GM13977 (cell line): ENCODE measurements at regions of chr17 and their contacts with region 1.

Region 1: GRCh38 chr17:73429440-73430164 is 117.8 kb upstream of the CDC42EP4 start:
- DNase-seq: peak; percentile 89
- CTCF ChIP-seq: peak; percentile 98

Region 2: GRCh38 chr17:72725433-72726068 is 704.1 kb before region 1 on chr17:
- in situ Hi-C with region 1: no loop called
- DNase-seq: peak; percentile 42
- CTCF ChIP-seq: peak; percentile 91

Region 3: GRCh38 chr17:73379826-73380225 is 49.8 kb before region 1 on chr17:
- in situ Hi-C with region 1: no loop called
- DNase-seq: no peak
- CTCF ChIP-seq: no peak

Region 4: DNA sequence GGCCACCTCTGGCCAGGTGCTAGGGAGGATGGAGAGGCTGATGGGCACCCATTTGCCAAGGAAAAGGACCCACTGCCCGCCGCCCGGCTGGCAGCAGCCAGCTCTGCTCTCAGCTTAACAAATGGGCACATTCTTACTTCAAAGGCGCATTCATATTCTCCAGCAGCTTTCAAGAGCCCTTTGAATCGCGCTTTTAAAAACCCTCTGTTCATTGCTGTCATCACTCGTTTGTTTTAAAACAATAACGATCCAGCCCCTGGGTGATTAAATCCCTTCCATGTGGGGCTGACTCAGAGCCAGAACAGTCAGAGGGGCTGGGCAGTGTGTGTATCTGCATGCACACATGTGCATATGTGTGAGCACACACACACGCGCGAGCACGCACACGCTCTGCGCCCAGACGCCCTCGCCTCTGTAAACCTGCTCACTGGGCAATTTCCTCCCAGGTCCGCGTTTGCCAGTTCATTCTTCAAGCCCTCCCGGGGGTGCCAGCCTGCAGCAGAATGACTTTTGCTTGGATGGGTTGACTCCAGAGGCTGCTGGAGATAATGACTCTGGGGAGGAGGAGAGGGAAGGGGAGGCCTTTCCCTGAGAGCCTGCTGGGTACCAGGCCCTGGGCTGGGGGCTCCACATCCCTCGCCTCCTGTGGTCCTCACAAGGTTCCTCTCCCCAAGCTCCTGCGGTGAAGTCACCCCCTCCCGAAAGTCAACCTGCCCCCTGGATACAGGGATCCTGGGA is 81.5 kb after region 1 on chr17:
- in situ Hi-C with region 1: no loop called
- DNase-seq: no peak
- CTCF ChIP-seq: no peak

Region 5: GRCh38 chr17:73710095-73710592 is 280.5 kb after region 1 on chr17:
- in situ Hi-C with region 1: loop called (anchors 10 kb)
- DNase-seq: peak; percentile 72
- CTCF ChIP-seq: peak; percentile 74

Region 6: GRCh38 chr17:73956669-73957465 is 527.3 kb after region 1 on chr17:
- in situ Hi-C with region 1: loop called (anchors 25 kb)
- DNase-seq: peak; percentile 82
- CTCF ChIP-seq: peak; percentile 70

Region 7: GRCh38 chr17:74430706-74431567 is 1001.3 kb after region 1 on chr17:
- in situ Hi-C with region 1: no loop called
- DNase-seq: peak; percentile 85
- CTCF ChIP-seq: no peak